ENCODE measurements at regions of chr1 and their contacts with region 1.

Region 1: DNA sequence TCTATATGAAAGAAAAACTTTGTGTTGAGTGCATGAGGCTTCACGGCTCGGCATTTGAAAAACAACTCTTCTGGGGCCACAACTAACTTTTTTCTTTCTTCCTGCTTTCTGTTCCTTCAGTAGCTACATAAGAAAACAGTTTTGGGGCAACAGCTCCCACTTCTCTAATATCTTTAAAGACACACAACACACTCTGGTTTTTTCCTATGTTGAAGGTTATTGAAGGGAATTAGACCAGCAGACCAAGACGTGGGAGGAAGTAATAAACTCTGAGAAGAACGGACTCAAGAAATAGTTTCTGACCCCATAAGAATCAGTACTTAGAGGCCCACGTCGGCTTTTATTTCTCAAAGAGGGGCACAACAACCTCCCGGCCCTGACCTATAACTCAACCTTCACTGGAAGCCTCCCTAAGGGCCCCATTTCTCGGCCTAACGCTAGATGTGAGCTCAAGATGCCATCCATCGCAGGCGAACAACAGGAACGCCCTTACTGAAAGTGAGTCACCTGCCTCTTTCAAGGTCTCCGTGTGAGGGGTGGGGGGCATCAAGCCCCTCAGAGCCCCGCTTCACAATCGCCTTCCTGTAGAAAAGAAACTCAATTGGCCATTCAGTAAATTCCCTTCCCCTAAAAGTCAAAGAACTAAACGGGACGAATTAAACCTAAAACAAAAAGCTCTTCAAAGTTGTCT is 844 bp downstream of the ZMYM6 start:
- DNase-seq: peak; percentile 21 to 42 (median 27)
- H3K4me3 ChIP-seq: peak overlapping the region; percentile 90 to 100 (median 96)
- H3K4me3 Mint-ChIP-seq: peak overlapping the region; percentile 95 to 97
- H3K27ac ChIP-seq: peak overlapping the region; percentile 89 to 92
- H3K27ac Mint-ChIP-seq: peak overlapping the region; percentile 94 to 99 (median 99)
- H3K4me1 ChIP-seq: peaks cover 14 to 28% of the 10 kb centered on the region in 2 donors
- H3K4me1 Mint-ChIP-seq: peaks cover 28% of the 10 kb centered on the region
- H3K27me3 ChIP-seq: no peaks in the 10 kb centered on the region
- H3K27me3 Mint-ChIP-seq: peaks cover 0 to 2% (median 2%) of the 10 kb centered on the region in 3 donors
- CTCF ChIP-seq: no peak

Region 2: DNA sequence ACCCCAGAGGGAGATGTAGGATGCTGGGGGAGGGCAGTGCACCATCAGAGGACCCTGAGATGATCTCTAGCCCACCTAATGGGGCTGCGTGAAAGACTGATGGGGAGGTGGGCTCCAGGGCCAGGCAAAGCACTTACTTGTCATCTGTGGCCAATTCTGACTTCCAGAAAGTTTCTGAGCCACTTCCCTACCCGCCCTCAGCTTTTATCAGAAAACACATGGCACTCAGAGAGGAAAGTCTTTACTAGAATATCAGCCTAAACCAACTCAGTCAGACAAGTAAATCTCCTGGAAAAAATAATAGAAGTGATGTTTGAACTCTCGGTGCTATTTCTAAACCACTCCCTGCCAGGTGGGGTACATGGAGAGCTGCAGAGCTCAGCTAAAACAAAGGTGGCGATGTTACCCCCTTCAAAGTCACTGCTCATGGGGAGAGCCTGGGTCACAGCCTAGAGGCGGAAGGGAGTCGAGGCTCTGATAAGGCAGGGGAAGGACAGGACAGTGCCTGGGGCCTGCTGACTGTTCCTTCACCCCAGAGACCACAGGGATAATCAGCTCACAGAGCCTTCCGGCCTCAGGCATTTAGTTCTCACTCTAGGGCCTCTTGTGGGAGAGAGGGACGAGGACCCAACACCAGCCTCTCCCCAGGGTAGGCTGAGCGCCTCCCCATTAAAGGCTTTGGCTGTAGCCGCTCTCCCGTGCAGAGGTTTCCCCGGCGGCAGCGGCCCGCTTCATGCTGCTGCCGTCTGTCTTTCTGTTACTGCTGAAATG is 185.6 kb before region 1 on chr1:
- intact Hi-C with region 1: loop called (anchors 5 to 10 kb)
- DNase-seq: no peak
- H3K4me3 ChIP-seq: no peak overlapping the region
- H3K4me3 Mint-ChIP-seq: no peak overlapping the region
- H3K27ac ChIP-seq: no peak overlapping the region
- H3K27ac Mint-ChIP-seq: peak overlapping the region in 1 of 7 donors; percentile 33
- H3K4me1 ChIP-seq: no peaks in the 10 kb centered on the region
- H3K4me1 Mint-ChIP-seq: peaks cover 15% of the 10 kb centered on the region
- H3K27me3 ChIP-seq: no peaks in the 10 kb centered on the region
- H3K27me3 Mint-ChIP-seq: peaks cover 0 to 3% (median 0%) of the 10 kb centered on the region in 3 donors
- CTCF ChIP-seq: no peak

Region 3: DNA sequence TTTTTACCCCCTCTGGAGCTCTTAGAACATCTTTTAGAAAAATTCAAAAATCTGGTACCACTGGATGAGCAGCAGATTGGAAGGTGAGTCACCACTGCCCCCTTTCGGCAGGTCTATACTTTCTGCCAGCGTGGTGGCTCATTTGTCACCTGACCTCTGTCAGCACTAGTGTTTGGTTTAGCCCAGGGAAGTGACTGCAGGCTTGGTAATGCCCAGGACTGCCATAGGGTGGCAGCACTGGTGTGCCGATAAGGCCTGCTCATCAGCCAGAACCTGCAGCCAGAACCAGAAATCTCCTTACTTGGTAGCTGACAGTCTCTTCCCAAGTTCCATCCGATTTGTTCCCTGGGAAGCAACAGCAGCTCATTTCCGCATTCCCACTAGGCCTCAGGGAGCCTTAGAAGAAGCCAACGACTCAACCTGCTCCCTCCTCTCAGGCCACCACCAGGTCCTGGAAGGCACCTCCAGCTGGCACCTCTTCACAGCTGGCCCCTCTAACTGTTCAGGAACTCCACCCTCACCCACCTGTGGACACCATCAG is 178.2 kb before region 1 on chr1:
- intact Hi-C with region 1: loop called (anchors 5 to 10 kb)
- DNase-seq: peak; percentile 82 to 90 (median 89)
- H3K4me3 ChIP-seq: no peak overlapping the region
- H3K4me3 Mint-ChIP-seq: no peak overlapping the region
- H3K27ac ChIP-seq: no peak overlapping the region
- H3K27ac Mint-ChIP-seq: peak overlapping the region in 3 of 7 donors; percentile 26 to 55 (median 36)
- H3K4me1 ChIP-seq: peaks cover 1 to 2% of the 10 kb centered on the region in 2 donors
- H3K4me1 Mint-ChIP-seq: peaks cover 10% of the 10 kb centered on the region
- H3K27me3 ChIP-seq: no peaks in the 10 kb centered on the region
- H3K27me3 Mint-ChIP-seq: peaks cover 0 to 3% (median 0%) of the 10 kb centered on the region in 3 donors
- CTCF ChIP-seq: peak; percentile 96

Region 4: GRCh38 chr1:35451125-35451528 is 420.2 kb after region 1 on chr1:
- intact Hi-C with region 1: no loop called
- DNase-seq: peak; percentile 56 to 73 (median 69)
- H3K4me3 ChIP-seq: peak overlapping the region in 1 of 3 experiments; percentile 45
- H3K4me3 Mint-ChIP-seq: peak overlapping the region in 1 of 2 donors; percentile 70
- H3K27ac ChIP-seq: peak overlapping the region in 1 of 2 donors; percentile 92
- H3K27ac Mint-ChIP-seq: peak overlapping the region in 4 of 7 donors; percentile 92 to 96 (median 94)
- H3K4me1 ChIP-seq: peaks cover 100% of the 10 kb centered on the region in 2 donors
- H3K4me1 Mint-ChIP-seq: peaks cover 7% of the 10 kb centered on the region
- H3K27me3 ChIP-seq: no peaks in the 10 kb centered on the region
- H3K27me3 Mint-ChIP-seq: no peaks in the 10 kb centered on the region
- CTCF ChIP-seq: peak; percentile 77

Region 5: GRCh38 chr1:35564037-35564883 is 533.4 kb after region 1 on chr1:
- intact Hi-C with region 1: no loop called
- DNase-seq: peak; percentile 63 to 77 (median 67)
- H3K4me3 ChIP-seq: no peak overlapping the region
- H3K4me3 Mint-ChIP-seq: no peak overlapping the region
- H3K27ac ChIP-seq: no peak overlapping the region
- H3K27ac Mint-ChIP-seq: peak overlapping the region in 2 of 7 donors; percentile 43 to 59
- H3K4me1 ChIP-seq: peaks cover 0 to 4% of the 10 kb centered on the region in 2 donors
- H3K4me1 Mint-ChIP-seq: peaks cover 34% of the 10 kb centered on the region
- H3K27me3 ChIP-seq: no peaks in the 10 kb centered on the region
- H3K27me3 Mint-ChIP-seq: no peaks in the 10 kb centered on the region
- CTCF ChIP-seq: peak; percentile 82

Measured in CD14-positive monocyte (primary cell).